BJ (cell line): ENCODE measurements at regions of chr1 and their contacts with region 1.

Region 1: DNA sequence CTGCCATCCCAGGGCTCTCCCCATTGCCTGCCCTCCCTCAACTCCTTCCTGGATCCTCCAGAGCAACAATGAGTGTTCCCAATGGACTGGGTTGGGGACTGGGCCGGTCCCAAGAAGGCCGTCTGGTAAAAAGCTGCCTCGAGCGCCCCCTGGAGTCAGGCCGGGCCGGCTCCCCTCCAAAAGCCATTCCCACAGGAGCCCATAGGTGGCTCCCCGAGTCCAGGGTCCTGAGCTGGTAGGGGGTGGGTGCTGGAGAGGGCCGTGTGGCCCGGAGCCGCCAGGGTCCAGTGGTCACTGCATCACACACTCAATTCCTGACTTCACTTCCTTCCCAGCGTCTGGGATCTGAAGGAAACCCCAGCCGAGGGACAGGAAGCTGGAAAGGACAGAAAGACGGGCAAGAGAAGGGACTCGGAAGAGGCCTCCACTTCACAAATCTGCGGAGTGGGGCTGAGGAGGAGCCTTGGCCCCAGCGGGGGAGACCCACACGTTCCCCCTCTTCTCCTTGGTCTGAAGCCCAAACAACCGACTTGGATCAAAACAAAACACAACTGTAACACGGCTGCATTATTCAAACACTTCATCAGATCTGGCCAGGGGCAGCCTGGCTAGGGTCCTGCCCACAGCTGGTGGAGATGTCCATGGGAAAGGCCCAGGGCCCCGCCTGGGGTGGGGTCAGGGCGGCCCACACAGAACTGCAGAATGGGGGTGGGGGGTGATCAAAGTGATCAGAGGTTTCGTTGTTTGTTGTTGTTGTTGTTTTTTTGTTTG is 10.9 kb upstream of the ALDH4A1 start:
- DNase-seq: no peak
- H3K4me3 ChIP-seq: no peak overlapping the region
- H3K27me3 ChIP-seq: no peaks in the 10 kb centered on the region
- CTCF ChIP-seq: peak; percentile 100

Region 2: DNA sequence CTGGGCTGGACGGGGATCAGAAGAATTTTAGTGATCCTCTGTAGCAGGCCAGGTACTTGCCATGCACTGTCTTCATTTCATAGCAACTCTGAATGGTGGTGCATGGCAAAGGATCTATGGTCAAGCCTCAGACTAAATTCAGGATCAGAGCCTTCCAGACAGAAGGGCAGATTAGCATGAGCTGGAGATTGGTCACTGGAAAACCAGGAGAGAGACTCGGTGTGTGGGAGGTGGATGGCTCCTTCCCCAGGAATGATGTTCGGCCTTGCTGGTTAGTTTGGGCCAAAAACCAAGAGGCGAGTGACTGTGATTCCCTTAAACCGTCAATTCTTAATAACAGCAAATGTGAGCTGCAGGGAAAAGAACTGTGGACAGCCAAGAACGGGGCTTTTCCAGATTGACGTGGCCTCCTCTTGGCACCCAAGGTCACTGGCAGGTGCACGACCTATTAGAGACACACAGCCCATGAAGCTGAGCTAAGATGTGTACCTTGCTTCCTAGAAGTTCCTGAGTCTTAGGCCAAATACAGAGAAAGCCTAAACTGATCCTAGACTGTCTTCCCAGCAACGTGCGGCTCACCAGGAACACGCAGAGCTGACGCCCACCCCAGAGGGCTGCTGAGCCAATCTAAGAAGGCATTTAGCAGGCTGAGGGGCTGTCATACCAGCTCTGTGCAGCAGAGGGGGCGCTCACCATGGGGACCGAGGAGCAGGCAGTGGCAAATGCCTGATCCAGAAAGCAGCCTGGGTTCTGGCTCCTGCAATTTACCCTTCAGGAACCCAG is 29.4 kb before region 1 on chr1:
- CTCF ChIA-PET with region 1: interaction called, 34 read pairs
- POLR2A ChIA-PET with region 1: no interaction called
- DNase-seq: peak; percentile 16
- H3K4me3 ChIP-seq: no peak overlapping the region
- H3K27me3 ChIP-seq: no peaks in the 10 kb centered on the region
- CTCF ChIP-seq: peak; percentile 94

Region 3: DNA sequence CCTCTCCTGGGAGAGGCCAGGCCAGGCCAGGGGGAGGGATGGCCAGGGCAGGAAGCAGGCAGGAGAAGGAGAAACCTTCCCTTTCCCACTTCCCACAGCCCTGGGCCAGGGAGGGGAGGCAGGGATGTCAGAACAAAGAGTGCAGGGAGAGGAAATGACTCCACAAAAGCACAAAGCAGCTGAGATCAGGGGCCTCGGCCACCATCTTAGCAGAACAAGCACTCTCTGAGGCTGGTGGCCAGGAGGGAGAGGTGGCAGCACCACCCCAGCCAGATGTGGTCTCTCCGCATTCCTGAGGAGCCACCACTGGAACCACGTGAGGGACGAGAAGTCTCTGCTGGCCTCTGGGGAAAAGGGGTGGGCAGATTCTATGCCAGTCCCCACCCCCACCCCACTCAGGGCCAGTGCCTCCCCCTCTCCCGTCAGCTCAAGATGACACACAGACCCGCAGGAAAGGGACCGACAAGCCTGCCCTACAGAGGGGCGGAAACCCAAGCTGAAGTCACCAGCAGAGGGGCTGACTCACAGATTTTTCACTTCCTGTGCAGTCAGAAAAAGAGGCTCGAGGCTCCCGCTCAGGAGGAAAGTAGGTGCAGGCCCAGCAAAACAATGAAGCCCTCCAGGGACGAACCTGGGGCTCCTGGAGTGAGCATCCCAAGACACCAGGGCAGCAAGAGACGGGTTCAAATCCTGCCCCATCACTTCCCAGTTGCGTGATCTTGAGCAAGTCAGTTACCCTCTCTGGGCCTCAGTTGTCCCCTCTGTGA is 13.2 kb after region 1 on chr1:
- CTCF ChIA-PET with region 1: interaction called, 87 read pairs
- POLR2A ChIA-PET with region 1: interaction called, 8 read pairs
- DNase-seq: peak; percentile 74
- H3K4me3 ChIP-seq: no peak overlapping the region
- H3K27me3 ChIP-seq: no peaks in the 10 kb centered on the region
- CTCF ChIP-seq: 0 out of 2 replicates have a peak, but pooled peaks have one; percentile 1

Region 4: GRCh38 chr1:18965206-18966173 is 52.2 kb after region 1 on chr1:
- CTCF ChIA-PET with region 1: interaction called, 33 read pairs
- POLR2A ChIA-PET with region 1: no interaction called
- DNase-seq: peak; percentile 62
- H3K4me3 ChIP-seq: no peak overlapping the region
- H3K27me3 ChIP-seq: no peaks in the 10 kb centered on the region
- CTCF ChIP-seq: no peak

Region 5: DNA sequence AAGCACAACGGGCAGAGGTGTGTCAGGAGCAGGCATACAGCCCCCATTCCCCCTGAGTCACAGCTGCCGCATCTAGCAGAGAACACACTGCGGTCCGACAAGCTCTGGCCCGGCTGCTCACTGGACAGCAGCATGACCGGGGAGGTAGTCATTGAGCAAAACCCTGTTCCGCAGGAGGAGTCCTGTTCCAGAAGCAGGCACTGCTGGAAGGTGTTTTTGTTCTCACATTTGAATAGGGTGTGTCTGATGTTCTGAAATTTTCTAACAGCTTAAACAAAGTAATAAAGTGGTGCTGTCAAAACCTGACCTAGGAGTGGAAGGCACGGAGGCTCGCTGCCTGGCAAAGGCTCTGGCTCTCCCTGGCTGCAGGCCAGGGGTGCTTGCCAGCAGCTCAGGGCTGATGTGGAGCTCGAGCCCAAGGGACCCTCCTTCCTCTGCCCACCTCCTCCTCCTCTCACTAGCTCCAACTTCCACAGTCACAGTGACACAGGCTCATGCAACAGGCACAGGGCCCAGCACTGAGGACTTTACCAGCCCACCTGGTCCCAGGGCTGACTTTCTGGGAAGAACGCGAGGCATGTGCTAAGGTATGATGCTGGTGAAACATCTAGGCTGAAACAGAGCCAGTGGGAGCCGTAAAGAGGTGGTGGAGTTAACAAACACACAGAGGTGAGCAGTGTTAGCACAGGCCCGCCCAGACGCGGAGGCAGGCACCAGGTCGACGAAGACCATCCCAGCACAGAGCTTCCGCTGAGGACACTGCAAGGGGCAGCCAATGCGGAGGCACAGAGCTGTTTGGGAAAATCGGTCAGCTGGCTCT is 161.9 kb after region 1 on chr1:
- CTCF ChIA-PET with region 1: interaction called, 33 read pairs
- POLR2A ChIA-PET with region 1: no interaction called
- DNase-seq: no peak
- H3K4me3 ChIP-seq: no peak overlapping the region
- H3K27me3 ChIP-seq: no peaks in the 10 kb centered on the region
- CTCF ChIP-seq: no peak

Region 6: DNA sequence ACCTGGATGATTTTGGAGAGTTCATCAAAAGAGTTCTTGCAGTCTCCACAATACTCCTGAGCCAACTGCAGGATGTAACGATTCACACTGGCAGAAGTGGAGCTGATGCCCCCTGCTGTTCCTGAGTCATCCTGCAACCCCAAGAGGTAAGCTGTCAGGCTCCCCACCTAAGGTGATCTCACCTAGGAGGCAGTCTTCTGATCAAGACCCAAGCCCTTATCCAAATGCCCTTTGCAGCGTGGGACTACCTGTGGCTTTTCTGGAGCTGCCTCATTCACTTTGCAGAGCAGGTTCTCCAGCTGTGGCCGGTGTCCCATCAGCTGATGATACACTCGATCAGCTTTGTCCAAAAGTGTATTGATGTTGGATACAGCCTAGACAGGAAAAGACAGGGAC is 200.4 kb after region 1 on chr1:
- CTCF ChIA-PET with region 1: interaction called, 27 read pairs
- POLR2A ChIA-PET with region 1: no interaction called
- DNase-seq: no peak
- H3K4me3 ChIP-seq: no peak overlapping the region
- H3K27me3 ChIP-seq: no peaks in the 10 kb centered on the region
- CTCF ChIP-seq: peak; percentile 57